ENCODE measurements at regions of chr7 and their contacts with region 1.

Region 1: DNA sequence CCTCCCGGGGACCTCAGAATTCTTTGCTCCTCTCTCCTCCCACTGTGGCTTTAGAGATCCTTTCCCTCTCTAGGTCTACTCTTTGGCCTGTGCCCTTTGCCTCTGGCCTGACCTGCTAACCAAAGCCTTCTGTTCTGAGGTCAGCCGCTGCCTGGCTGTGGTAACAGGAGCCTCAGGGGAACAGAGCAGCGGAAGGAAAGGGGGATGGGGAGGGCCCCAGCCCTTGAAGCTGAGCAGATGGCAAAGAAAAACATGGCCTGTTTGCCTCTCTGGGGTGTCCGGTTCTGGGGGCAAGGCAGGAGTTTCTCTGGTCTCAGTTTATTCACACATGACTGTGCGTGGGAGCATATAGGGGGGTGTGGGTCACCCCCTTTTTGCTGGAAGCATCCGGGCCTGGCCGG is 28.2 kb downstream of the COL26A1 start:
- DNase-seq: peak; percentile 66 to 80
- H3K4me3 ChIP-seq: no peak overlapping the region
- H3K4me3 Mint-ChIP-seq: no peak overlapping the region
- H3K27ac Mint-ChIP-seq: no peak overlapping the region
- H3K4me1 ChIP-seq: peaks cover 19% of the 10 kb centered on the region
- H3K4me1 Mint-ChIP-seq: peaks cover 6% of the 10 kb centered on the region
- H3K27me3 ChIP-seq: no peaks in the 10 kb centered on the region
- H3K27me3 Mint-ChIP-seq: no peaks in the 10 kb centered on the region
- CTCF ChIP-seq: no peak

Region 2: DNA sequence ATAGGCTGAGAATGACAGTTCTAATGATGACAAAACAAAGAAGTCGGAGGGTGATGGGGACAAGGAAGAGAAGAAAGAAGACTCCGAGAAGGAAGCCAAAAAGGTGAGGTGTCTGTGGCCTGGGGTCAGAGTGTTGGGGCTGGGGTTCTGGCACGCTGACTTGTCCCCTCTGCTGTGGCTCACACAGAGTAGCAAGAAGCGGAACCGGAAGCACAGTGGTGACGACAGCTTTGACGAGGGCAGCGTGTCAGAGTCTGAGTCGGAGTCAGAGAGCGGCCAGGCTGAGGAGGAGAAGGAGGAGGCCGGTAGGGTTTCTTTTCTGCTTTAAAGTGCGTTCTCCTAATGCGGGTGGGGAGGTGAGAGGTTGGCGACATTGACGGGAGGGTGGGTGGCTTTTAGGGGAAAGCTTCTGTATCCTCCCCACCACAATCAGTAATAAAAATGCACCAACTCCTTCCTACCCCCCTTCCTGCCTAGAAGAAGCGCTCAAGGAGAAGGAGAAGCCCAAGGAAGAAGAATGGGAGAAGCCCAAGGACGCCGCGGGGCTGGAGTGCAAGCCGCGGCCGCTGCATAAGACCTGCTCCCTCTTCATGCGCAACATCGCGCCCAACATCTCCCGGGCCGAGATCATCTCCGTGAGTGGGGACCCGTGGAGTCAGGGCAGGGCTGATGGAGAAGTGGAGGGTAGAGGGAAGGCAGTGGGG is 506.0 kb before region 1 on chr7:
- CTCF ChIA-PET with region 1: no interaction called
- POLR2A ChIA-PET with region 1: no interaction called
- intact Hi-C with region 1: no loop called
- DNase-seq: no peak
- H3K4me3 ChIP-seq: no peak overlapping the region
- H3K4me3 Mint-ChIP-seq: no peak overlapping the region
- H3K27ac Mint-ChIP-seq: peak overlapping the region; percentile 9
- H3K4me1 ChIP-seq: peaks cover 12% of the 10 kb centered on the region; the same call in 1 of the 2 replicates
- H3K4me1 Mint-ChIP-seq: peaks cover 45% of the 10 kb centered on the region
- H3K27me3 ChIP-seq: no peaks in the 10 kb centered on the region
- H3K27me3 Mint-ChIP-seq: no peaks in the 10 kb centered on the region
- CTCF ChIP-seq: no peak

Region 3: GRCh38 chr7:101347477-101347876 is 43.4 kb before region 1 on chr7:
- CTCF ChIA-PET with region 1: no interaction called
- POLR2A ChIA-PET with region 1: no interaction called
- intact Hi-C with region 1: no loop called
- DNase-seq: no peak
- H3K4me3 ChIP-seq: no peak overlapping the region
- H3K4me3 Mint-ChIP-seq: no peak overlapping the region
- H3K27ac Mint-ChIP-seq: no peak overlapping the region
- H3K4me1 ChIP-seq: peaks cover 6% of the 10 kb centered on the region; the same call in 1 of the 2 replicates
- H3K4me1 Mint-ChIP-seq: peaks cover 9% of the 10 kb centered on the region
- H3K27me3 ChIP-seq: no peaks in the 10 kb centered on the region
- H3K27me3 Mint-ChIP-seq: no peaks in the 10 kb centered on the region
- CTCF ChIP-seq: no peak

Region 4: GRCh38 chr7:101436857-101437576 is 46.1 kb after region 1 on chr7:
- CTCF ChIA-PET with region 1: no interaction called
- POLR2A ChIA-PET with region 1: no interaction called
- intact Hi-C with region 1: loop called (anchors 5 kb)
- DNase-seq: peak; percentile 69 to 80
- H3K4me3 ChIP-seq: no peak overlapping the region
- H3K4me3 Mint-ChIP-seq: peak overlapping the region; percentile 28
- H3K27ac Mint-ChIP-seq: peak overlapping the region; percentile 21
- H3K4me1 ChIP-seq: peaks cover 11% of the 10 kb centered on the region
- H3K4me1 Mint-ChIP-seq: peaks cover 7% of the 10 kb centered on the region
- H3K27me3 ChIP-seq: no peaks in the 10 kb centered on the region
- H3K27me3 Mint-ChIP-seq: no peaks in the 10 kb centered on the region
- CTCF ChIP-seq: no peak